Activated T-helper 1 cell treated with anti-CD3 and anti-CD28 coated beads, Interleukin-12 subunit alpha, Interleukin-12 subunit beta, Interleukin-2, Interleukin-4 antibody, amounts not matched to agents 30 ng/mL and 10 ng/mL and 1 ng/mL, durations not matched to agents 14 hours and 24 hours and 36 hours (primary cell): ENCODE measurements at regions of chr9 and their contacts with region 1.

Region 1: DNA sequence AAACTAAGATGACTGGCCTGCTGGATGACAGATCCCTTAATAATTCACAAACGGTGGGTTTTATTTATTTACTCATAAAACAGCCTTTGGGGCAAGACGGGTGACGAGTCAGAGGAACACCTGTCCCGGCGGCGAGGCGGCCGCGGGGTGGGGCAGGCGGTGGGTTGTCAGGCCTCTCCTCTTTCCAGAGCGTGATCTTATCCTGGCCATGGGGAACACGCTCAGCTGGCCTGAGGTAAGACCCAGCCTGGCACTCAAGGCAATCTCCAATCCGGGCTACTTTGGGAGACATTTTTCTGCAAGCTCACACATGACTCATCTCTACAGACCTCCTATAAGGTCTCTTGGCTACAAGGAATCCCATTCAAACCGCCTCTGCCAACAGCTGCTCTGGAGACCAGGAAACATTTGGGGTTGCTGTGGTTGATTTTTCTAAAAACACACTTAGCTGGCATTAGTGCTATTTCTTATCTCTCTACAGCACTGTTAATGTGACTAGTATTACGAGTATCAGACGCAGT is 6.3 kb downstream of the RAPGEF1 start:
- DNase-seq: no peak
- H3K4me3 Mint-ChIP-seq: peak overlapping the region; percentile 73
- H3K27ac Mint-ChIP-seq: peak overlapping the region; percentile 96
- H3K4me1 Mint-ChIP-seq: peaks cover 84% of the 10 kb centered on the region
- H3K27me3 Mint-ChIP-seq: no peaks in the 10 kb centered on the region

Region 2: DNA sequence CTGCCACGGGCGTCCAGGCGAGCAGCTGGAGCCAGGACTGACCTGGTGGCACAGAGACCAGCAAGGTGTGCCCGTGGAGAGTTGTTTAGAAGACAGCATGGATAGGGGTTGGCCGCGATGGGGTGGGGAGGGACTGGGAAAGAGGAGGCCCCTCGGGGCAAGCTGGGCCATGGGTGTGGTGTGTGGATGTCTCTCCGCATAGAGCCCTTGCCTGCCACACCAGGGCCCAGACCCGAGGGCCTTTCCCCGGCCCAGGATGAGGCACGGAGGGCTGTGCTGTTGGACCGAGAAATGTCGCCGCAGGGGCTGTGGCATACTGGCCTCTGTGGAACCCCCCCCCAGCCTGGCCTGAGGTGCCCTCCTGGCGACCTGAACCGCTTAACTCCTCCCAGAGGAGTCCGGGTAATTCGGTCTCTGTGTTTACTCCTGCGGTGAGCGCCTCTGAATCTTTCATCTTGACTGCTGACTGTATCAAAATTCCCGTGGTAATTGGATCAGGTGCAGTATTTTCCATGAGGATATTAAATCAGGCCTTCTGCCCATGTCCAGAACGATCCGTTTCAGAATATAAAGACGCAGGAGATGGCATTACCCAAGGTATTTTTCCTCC is 747.1 kb before region 1 on chr9:
- intact Hi-C with region 1: no loop called
- DNase-seq: no peak
- H3K4me3 Mint-ChIP-seq: no peak overlapping the region
- H3K27ac Mint-ChIP-seq: no peak overlapping the region
- H3K4me1 Mint-ChIP-seq: no peaks in the 10 kb centered on the region
- H3K27me3 Mint-ChIP-seq: no peaks in the 10 kb centered on the region

Region 3: DNA sequence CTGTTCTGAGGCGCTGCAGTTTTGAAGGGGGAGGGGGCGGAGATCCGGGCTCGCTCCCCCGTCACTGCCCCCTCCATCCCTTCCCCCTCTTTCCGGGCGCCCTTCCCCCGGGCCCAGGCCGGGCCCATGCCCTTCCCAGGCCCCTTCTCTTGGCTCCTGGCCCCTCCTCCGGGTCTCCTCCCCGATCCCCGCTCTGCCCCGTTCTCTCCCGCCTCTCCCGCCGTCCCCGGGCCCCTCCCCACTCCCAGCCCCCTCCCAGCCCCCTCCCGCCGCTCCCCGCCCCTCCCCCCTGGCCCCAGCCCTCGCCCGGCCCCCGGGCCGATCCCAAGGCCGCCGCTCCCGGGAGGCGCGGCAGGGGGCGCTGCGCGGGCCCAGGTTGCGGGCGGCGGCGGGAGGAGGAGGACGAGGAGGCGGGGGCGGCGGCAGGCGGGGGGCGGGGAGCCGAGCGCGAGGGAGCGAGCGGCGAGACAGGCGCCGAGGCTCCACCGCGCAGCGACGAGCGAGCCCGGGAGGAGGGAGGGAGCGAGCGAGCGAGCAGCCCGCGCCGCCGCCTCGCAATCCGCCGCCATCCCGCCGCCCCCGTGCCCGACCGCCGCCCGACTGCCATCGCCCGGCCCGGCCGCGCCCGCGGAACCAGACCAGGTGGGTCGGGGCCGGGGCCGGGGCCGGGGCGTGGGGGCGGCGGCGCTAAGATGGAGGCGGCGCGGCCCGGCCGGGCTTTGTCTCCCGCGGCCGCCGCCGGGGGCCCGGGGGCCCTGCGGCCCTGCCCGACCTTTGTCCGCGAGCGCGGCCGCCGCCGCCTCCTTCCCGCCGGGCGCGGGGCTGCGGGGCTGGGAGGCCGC is 339.8 kb before region 1 on chr9 and contains the start of gene PRRC2B:
- intact Hi-C with region 1: loop called (anchors 5 kb)
- DNase-seq: peak; percentile 76
- H3K4me3 Mint-ChIP-seq: peak within 1 kb of the TSS; percentile 89
- H3K27ac Mint-ChIP-seq: peak within 1 kb of the TSS; percentile 93
- H3K4me1 Mint-ChIP-seq: peaks cover 49% of the 10 kb centered on the region
- H3K27me3 Mint-ChIP-seq: peaks cover 21% of the 10 kb centered on the region
- total RNA-seq, gene PRRC2B: 103 and 108 TPM in 2 replicates

Region 4: DNA sequence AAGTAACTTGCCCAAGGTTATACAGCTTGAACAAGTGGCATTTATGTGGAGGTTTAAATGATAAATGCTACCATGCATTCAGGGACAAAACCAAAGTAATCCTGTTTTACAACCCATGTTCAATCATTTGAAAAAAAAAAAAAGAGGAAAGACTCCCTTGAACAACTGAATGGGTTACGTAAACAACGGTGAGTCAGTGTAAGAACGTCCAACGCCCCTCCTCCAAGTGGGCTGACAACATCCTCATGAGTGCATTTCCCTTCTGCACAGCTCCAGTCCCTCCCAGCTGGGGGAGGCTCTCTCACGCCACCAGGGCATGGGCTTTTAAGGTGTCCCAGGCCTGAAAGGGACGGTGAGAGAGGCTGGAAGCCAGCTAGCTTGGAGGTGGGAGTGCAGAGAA is 98.3 kb before region 1 on chr9:
- intact Hi-C with region 1: loop called (anchors 2 kb)
- DNase-seq: peak; percentile 74
- H3K4me3 Mint-ChIP-seq: peak overlapping the region; percentile 33
- H3K27ac Mint-ChIP-seq: peak overlapping the region; percentile 85
- H3K4me1 Mint-ChIP-seq: peaks cover 78% of the 10 kb centered on the region
- H3K27me3 Mint-ChIP-seq: peaks cover 2% of the 10 kb centered on the region

Region 5: GRCh38 chr9:131657890-131658752 is 75.5 kb before region 1 on chr9:
- intact Hi-C with region 1: loop called (anchors 1 kb)
- DNase-seq: no peak
- H3K4me3 Mint-ChIP-seq: peak overlapping the region; percentile 73
- H3K27ac Mint-ChIP-seq: peak overlapping the region; percentile 100
- H3K4me1 Mint-ChIP-seq: peaks cover 91% of the 10 kb centered on the region
- H3K27me3 Mint-ChIP-seq: no peaks in the 10 kb centered on the region

Region 6: GRCh38 chr9:131709771-131710454 is 23.7 kb before region 1 on chr9:
- intact Hi-C with region 1: loop called (anchors 1 kb)
- DNase-seq: peak; percentile 44
- H3K4me3 Mint-ChIP-seq: peak overlapping the region; percentile 69
- H3K27ac Mint-ChIP-seq: peak overlapping the region; percentile 97
- H3K4me1 Mint-ChIP-seq: peaks cover 76% of the 10 kb centered on the region
- H3K27me3 Mint-ChIP-seq: no peaks in the 10 kb centered on the region